Panc1 (cell line): ENCODE measurements at regions of chr1 and their contacts with region 1.

Region 1: DNA sequence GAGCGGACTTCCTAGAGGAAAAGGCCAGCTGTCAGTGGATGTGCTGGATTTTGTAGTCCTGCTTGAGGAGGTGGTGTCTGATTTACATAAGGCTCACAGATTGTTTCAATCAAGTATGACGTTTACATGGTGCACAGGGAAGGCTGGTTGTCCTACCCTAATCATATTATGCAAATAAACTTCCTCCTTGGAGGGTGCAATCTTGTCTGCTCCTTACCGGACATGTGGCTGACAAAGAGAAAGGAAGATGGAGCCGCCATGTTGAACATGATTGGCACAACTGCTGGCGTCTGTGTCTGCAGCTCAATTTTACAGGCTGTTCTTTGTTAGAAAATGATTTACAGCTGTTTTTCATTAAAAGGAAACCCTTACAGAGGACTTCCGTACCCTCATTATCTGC is 1656.1 kb downstream of the KCNT2 start:
- DNase-seq: no peak
- ATAC-seq: no peak
- H3K4me3 ChIP-seq: no peak overlapping the region
- H3K27ac ChIP-seq: no peak overlapping the region
- H3K4me1 ChIP-seq: no peaks in the 10 kb centered on the region
- H3K27me3 ChIP-seq: no peaks in the 10 kb centered on the region
- CTCF ChIP-seq: no peak

Region 2: GRCh38 chr1:194929357-194929756 is 22.8 kb before region 1 on chr1:
- CTCF ChIA-PET with region 1: no interaction called
- POLR2A ChIA-PET with region 1: no interaction called
- in situ Hi-C with region 1: no loop called
- intact Hi-C with region 1: loop called (anchors 2 kb)
- DNase-seq: no peak
- ATAC-seq: no peak
- H3K4me3 ChIP-seq: no peak overlapping the region
- H3K27ac ChIP-seq: no peak overlapping the region
- H3K4me1 ChIP-seq: no peaks in the 10 kb centered on the region
- H3K27me3 ChIP-seq: no peaks in the 10 kb centered on the region
- CTCF ChIP-seq: no peak